ENCODE measurements at regions of chr9 and their contacts with region 1.

Region 1: DNA sequence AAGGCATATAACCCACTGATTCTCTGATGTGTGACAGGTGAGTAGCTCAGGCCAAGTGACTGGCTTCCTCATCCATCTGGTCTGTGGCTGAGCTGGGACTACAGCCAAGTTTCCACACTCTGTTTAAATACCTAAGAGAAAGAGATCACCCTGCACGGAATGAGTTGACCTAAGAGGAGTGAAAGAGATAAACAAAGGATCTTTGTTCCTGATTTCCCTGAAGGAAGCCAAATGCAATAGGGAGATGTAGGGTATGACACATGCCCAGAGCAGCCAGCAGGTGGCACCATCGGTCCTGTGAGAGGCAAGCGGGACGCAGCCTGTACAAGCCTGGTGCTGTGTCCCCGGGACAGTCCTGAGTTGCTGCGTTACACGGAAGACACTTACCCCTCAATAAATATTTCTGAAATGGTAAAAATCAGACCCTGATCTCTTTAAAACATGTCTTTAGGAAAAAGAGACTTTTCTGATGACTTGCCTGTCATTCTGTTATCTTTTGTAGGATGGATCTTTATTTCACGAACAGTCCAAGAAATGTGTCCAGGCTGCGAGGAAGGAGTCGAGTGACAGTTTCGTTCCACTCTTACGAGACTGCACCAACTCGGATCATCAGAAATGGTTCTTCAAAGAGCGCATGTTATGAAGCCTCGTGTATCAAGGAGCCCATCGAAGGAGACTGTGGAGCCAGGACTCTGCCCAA is 41.1 kb downstream of the GALNT12 start:
- DNase-seq: peak; percentile 81
- H3K4me3 Mint-ChIP-seq: no peak overlapping the region
- H3K27ac Mint-ChIP-seq: no peak overlapping the region
- H3K4me1 Mint-ChIP-seq: peaks cover 11% of the 10 kb centered on the region
- H3K27me3 Mint-ChIP-seq: no peaks in the 10 kb centered on the region

Region 2: GRCh38 chr9:98807070-98807810 is 41.4 kb before region 1 on chr9 and contains the start of gene GALNT12:
- CTCF ChIA-PET with region 1: interaction called, 15 read pairs
- POLR2A ChIA-PET with region 1: no interaction called
- DNase-seq: peak; percentile 44
- H3K4me3 Mint-ChIP-seq: peak within 1 kb of the TSS; percentile 63
- H3K27ac Mint-ChIP-seq: no peak within 1 kb of the TSS
- H3K4me1 Mint-ChIP-seq: peaks cover 25% of the 10 kb centered on the region
- H3K27me3 Mint-ChIP-seq: peaks cover 60% of the 10 kb centered on the region
- total RNA-seq, gene GALNT12: 2.0 to 2.2 TPM

Region 3: GRCh38 chr9:98838155-98838867 is 10.3 kb before region 1 on chr9:
- CTCF ChIA-PET with region 1: interaction called, 32 read pairs
- POLR2A ChIA-PET with region 1: no interaction called
- DNase-seq: no peak
- H3K4me3 Mint-ChIP-seq: no peak overlapping the region
- H3K27ac Mint-ChIP-seq: no peak overlapping the region
- H3K4me1 Mint-ChIP-seq: no peaks in the 10 kb centered on the region
- H3K27me3 Mint-ChIP-seq: no peaks in the 10 kb centered on the region

Region 4: DNA sequence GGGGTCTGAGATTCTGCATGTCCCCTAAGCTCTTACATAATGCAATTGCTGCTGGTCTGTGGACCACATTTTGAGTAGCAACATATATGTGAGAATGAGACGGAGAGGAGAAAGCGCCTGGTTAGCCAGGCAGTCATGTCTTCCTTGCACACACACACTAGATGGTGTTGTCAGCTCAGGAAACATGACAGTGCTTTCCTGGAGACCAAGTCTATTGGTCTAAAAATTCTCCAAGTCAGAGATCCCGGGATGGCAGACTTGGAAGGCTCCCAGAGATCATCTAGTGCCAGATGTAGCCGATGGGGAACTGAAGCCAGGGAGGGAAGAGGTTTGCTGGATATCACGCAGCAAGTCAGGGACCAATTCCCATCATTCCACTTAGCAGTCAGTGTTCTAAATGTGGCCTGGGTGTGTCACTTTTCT is 12.3 kb after region 1 on chr9:
- CTCF ChIA-PET with region 1: interaction called, 17 read pairs
- POLR2A ChIA-PET with region 1: no interaction called
- DNase-seq: no peak
- H3K4me3 Mint-ChIP-seq: no peak overlapping the region
- H3K27ac Mint-ChIP-seq: no peak overlapping the region
- H3K4me1 Mint-ChIP-seq: no peaks in the 10 kb centered on the region
- H3K27me3 Mint-ChIP-seq: peaks cover 42% of the 10 kb centered on the region

Region 5: DNA sequence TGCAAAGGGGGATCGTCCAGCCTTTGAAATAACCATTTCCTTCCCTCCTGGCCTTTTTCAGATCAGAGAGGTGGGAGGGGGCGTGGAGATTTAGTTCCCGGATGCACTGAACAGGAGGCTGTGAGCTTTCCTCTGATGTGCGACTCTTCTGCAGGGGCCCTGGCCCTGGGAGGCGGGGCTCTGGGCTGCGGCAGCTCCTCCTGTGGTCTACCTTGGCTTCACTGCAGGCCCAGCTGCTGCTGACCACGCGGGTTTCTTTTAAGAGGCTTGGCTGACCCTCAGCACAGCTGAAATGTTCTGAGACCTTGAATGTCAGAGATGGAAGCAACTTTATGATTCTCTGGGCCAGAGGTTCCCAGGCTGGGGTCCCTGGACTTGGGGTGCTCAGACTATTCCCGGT is 68.1 kb after region 1 on chr9:
- CTCF ChIA-PET with region 1: no interaction called
- POLR2A ChIA-PET with region 1: no interaction called
- DNase-seq: no peak
- H3K4me3 Mint-ChIP-seq: no peak overlapping the region
- H3K27ac Mint-ChIP-seq: no peak overlapping the region
- H3K4me1 Mint-ChIP-seq: no peaks in the 10 kb centered on the region
- H3K27me3 Mint-ChIP-seq: peaks cover 7% of the 10 kb centered on the region

Region 6: GRCh38 chr9:98974994-98975712 is 126.6 kb after region 1 on chr9:
- CTCF ChIA-PET with region 1: interaction called, 17 read pairs
- POLR2A ChIA-PET with region 1: no interaction called
- DNase-seq: peak; percentile 82
- H3K4me3 Mint-ChIP-seq: no peak overlapping the region
- H3K27ac Mint-ChIP-seq: no peak overlapping the region
- H3K4me1 Mint-ChIP-seq: peaks cover 8% of the 10 kb centered on the region
- H3K27me3 Mint-ChIP-seq: peaks cover 26% of the 10 kb centered on the region

Region 7: DNA sequence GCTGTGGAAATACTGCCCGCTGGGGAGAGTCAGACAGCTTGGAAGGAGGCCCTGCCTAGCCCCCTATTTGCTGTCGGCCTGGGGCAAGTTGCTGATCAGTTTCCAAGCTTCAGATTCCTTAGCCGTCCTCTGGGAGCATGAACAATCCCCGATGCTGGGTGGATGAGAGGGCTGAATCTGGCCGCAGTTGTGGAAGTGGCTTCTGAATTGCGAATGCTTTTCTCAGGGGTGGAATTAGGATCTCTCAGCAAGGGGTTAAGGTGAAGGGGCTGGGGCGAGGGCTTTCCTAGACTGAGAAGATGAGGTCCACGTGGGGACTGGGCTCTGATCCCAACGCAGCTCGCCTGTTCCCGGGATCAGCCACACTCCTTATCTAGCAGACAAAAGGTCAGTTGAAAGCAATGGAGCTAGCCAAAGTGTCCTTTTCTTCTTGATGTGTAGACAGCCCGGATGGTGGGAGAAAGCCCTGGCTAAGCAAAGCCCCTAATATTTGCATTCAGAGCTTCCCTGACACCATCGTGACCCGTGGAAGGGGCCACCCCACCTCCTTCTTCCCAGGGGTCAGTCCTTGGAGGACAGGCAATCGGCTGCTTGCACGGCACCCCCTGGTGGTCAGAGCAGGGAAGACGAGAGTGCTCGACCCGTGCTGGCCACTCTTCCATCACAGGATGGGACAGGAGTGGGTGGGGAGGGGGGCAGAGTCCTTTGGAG is 150.0 kb after region 1 on chr9:
- CTCF ChIA-PET with region 1: interaction called, 59 read pairs
- POLR2A ChIA-PET with region 1: no interaction called
- DNase-seq: peak; percentile 63
- H3K4me3 Mint-ChIP-seq: no peak overlapping the region
- H3K27ac Mint-ChIP-seq: no peak overlapping the region
- H3K4me1 Mint-ChIP-seq: peaks cover 24% of the 10 kb centered on the region
- H3K27me3 Mint-ChIP-seq: peaks cover 22% of the 10 kb centered on the region

Region 8: GRCh38 chr9:99140685-99141314 is 292.2 kb after region 1 on chr9:
- CTCF ChIA-PET with region 1: interaction called, 51 read pairs
- POLR2A ChIA-PET with region 1: no interaction called
- DNase-seq: peak; percentile 48
- H3K4me3 Mint-ChIP-seq: no peak overlapping the region
- H3K27ac Mint-ChIP-seq: no peak overlapping the region
- H3K4me1 Mint-ChIP-seq: peaks cover 31% of the 10 kb centered on the region
- H3K27me3 Mint-ChIP-seq: no peaks in the 10 kb centered on the region